ENCODE measurements at regions of chr5 and their contacts with region 1.

Region 1: DNA sequence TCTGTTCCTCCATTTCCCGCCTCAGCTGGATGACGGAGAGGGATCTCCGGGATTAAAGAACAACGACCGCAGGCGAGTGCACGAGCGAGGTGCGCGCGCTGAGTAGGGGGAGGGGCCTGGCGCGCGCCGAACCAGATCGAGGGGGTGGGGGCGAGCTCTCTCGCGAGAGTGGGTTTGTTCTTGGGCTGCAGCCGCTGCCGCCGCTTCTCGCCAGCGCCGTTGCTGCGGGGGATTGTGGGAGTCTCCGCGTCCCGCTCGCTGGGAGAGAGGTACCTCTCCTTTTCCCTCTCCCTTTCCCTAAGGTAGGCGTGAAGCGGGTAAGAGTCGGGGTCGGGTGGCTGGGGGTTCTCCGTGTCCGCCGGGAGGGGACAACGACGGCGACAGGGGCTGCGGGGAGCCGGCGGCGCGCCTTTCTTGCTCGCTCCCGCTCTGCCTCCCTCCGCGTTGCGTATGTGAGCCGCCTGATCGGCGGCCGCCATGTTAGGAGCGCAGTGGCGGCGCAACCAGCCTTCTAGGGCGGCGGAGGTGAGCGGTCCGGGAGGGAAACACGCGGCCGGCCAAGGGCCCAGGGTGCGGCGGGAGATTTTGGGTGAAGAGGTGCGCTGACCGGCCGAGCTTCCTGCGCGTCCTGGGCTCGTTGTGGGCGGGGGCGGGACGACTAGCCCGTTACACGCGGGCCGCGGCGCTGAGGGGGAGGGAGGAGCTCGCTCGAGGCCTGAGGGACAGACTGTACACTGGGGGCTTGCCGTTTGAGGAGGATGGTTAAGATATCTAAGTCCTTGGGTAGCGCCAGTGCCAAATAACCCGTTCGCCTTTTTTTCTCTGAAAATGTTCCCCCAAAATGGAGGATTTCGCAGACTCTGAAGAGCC is at the start of gene MATR3:
- DNase-seq: peak; percentile 90 to 95 (median 91)
- H3K4me3 ChIP-seq: peak within 1 kb of the TSS; percentile 78
- H3K4me3 Mint-ChIP-seq: peak within 1 kb of the TSS; percentile 93 to 99 (median 98)
- H3K27ac ChIP-seq: peak within 1 kb of the TSS; percentile 97
- H3K27ac Mint-ChIP-seq: peak within 1 kb of the TSS; percentile 68 to 99 (median 98)
- H3K4me1 ChIP-seq: peaks cover 38% of the 10 kb centered on the region
- H3K4me1 Mint-ChIP-seq: peaks cover 39 to 50% (median 49%) of the 10 kb centered on the region in 3 donors
- H3K27me3 ChIP-seq: no peaks in the 10 kb centered on the region
- H3K27me3 Mint-ChIP-seq: peaks cover 0 to 5% of the 10 kb centered on the region in 2 donors
- total RNA-seq, gene MATR3: 184 to 199 TPM

Region 2: GRCh38 chr5:138542956-138543729 is 750.6 kb before region 1 on chr5 and contains the start of gene ETF1:
- CTCF ChIA-PET with region 1: no interaction called
- POLR2A ChIA-PET with region 1: interaction called, 14 read pairs
- DNase-seq: peak; percentile 99 to 100 (median 100)
- H3K4me3 ChIP-seq: peak within 1 kb of the TSS; percentile 89
- H3K4me3 Mint-ChIP-seq: peak within 1 kb of the TSS; percentile 96 to 100 (median 98)
- H3K27ac ChIP-seq: peak within 1 kb of the TSS; percentile 99
- H3K27ac Mint-ChIP-seq: peak within 1 kb of the TSS; percentile 99 to 100 (median 100)
- H3K4me1 ChIP-seq: peaks cover 75% of the 10 kb centered on the region
- H3K4me1 Mint-ChIP-seq: peaks cover 71 to 94% (median 75%) of the 10 kb centered on the region in 3 donors
- H3K27me3 ChIP-seq: no peaks in the 10 kb centered on the region
- H3K27me3 Mint-ChIP-seq: no peaks in the 10 kb centered on the region
- total RNA-seq, gene ETF1: 239 to 246 TPM

Region 3: DNA sequence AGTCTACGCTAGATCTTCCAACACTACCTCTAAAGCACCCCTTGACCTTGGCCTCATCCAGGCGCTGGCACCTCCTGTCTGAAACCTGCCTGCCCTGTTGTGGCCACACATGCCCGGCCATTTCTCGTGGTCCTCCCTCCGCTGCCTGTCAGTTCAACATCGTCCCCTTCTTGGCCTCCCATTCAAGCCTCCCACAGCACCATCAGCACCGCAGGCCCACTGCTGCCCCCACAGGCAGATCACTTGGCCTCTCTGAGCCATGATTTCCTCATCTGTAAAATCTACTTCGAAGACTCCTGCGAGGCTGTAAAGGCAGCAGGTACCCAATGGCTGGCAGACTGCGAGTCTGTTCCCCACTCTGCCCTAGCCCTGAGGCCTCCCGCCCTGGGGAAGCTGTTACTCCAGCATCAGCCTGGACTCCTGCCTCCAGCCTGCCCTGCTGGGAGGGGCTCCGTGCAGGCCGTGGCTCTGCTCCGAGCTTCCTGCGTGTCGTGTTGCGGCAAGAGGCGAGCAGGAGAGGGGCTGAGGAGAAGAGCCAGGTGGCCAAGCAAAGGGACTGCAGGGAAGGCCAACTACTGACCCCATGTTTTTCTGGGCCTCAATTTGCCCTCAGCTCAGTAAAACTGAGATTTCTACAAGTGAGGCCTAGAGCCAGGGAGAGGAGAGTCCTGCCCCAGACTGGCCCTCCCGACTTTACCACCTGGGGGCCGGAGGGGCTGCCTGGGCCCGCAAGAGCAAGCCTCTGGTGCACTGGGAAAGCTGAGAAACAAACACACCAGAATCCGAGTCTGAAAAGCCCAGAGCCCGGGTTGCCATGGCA is 348.1 kb before region 1 on chr5:
- CTCF ChIA-PET with region 1: no interaction called
- POLR2A ChIA-PET with region 1: no interaction called
- DNase-seq: no peak
- H3K4me3 ChIP-seq: no peak overlapping the region
- H3K4me3 Mint-ChIP-seq: peak overlapping the region in 1 of 7 donors; percentile 83
- H3K27ac ChIP-seq: no peak overlapping the region
- H3K27ac Mint-ChIP-seq: no peak overlapping the region
- H3K4me1 ChIP-seq: no peaks in the 10 kb centered on the region
- H3K4me1 Mint-ChIP-seq: peaks cover 2 to 6% (median 4%) of the 10 kb centered on the region in 3 donors
- H3K27me3 ChIP-seq: no peaks in the 10 kb centered on the region
- H3K27me3 Mint-ChIP-seq: peaks cover 0 to 2% of the 10 kb centered on the region in 2 donors

Region 4: DNA sequence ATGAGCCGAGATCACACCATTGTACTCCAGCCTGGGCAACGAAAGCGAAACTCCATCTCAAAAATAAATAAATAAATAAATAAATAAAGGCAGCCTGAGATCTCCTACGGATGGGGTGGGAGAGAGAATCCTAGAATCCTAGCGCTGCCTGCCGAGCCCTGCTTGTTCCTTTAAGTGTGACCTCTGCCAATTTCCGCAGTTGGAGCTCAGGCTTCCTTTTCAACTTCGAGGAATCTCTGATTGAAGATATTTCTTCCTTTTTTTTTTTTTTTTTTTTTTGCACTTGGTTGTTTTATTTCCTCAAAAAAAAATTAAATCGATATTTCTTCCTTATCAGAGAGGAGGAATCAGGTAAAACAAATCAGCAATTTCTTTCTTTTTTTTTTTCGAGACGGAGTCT is 27.5 kb before region 1 on chr5:
- CTCF ChIA-PET with region 1: no interaction called
- POLR2A ChIA-PET with region 1: interaction called, 10 read pairs
- DNase-seq: no peak
- H3K4me3 ChIP-seq: no peak overlapping the region
- H3K4me3 Mint-ChIP-seq: no peak overlapping the region
- H3K27ac ChIP-seq: no peak overlapping the region
- H3K27ac Mint-ChIP-seq: no peak overlapping the region
- H3K4me1 ChIP-seq: no peaks in the 10 kb centered on the region
- H3K4me1 Mint-ChIP-seq: peaks cover 2 to 21% (median 19%) of the 10 kb centered on the region in 3 donors
- H3K27me3 ChIP-seq: no peaks in the 10 kb centered on the region
- H3K27me3 Mint-ChIP-seq: no peaks in the 10 kb centered on the region

Region 5: GRCh38 chr5:139304391-139305324 is 10.9 kb after region 1 on chr5:
- CTCF ChIA-PET with region 1: interaction called, 4 read pairs
- POLR2A ChIA-PET with region 1: interaction called, 16 read pairs
- DNase-seq: no peak
- H3K4me3 ChIP-seq: no peak overlapping the region
- H3K4me3 Mint-ChIP-seq: peak overlapping the region; percentile 21 to 75 (median 66)
- H3K27ac ChIP-seq: no peak overlapping the region
- H3K27ac Mint-ChIP-seq: peak overlapping the region; percentile 2 to 81 (median 38)
- H3K4me1 ChIP-seq: peaks cover 98% of the 10 kb centered on the region
- H3K4me1 Mint-ChIP-seq: peaks cover 90 to 97% (median 95%) of the 10 kb centered on the region in 3 donors
- H3K27me3 ChIP-seq: no peaks in the 10 kb centered on the region
- H3K27me3 Mint-ChIP-seq: no peaks in the 10 kb centered on the region

Region 6: DNA sequence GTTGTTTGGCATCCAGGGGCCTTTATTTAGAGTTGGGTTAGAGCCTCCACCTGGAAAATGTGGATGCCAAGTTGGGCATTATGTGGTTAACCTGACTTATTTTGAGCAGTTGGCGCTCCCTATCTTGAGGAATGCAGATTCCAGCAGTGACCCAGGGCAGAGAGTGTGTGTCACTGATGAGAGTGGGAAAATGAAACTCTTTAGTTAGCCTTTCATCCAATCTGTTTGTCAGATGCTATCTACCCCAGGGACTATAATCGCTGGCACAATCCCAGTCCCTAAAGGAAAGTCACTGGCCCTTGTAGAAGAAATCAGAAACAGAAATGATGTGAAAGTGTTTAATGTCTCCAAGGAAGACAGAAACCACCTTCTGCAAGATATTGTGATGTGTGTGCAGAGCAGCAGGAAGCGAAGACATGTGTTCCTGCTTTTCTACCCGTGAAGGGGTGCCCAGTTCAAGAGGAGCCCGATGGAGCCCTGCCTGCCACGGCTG is 199.0 kb after region 1 on chr5:
- CTCF ChIA-PET with region 1: no interaction called
- POLR2A ChIA-PET with region 1: no interaction called
- DNase-seq: no peak
- H3K4me3 ChIP-seq: no peak overlapping the region
- H3K4me3 Mint-ChIP-seq: peak overlapping the region in 1 of 7 donors; percentile 6
- H3K27ac ChIP-seq: no peak overlapping the region
- H3K27ac Mint-ChIP-seq: no peak overlapping the region
- H3K4me1 ChIP-seq: peaks cover 11% of the 10 kb centered on the region
- H3K4me1 Mint-ChIP-seq: peaks cover 3 to 23% (median 9%) of the 10 kb centered on the region in 3 donors
- H3K27me3 ChIP-seq: no peaks in the 10 kb centered on the region
- H3K27me3 Mint-ChIP-seq: peaks cover 0 to 5% of the 10 kb centered on the region in 2 donors

Region 7: GRCh38 chr5:139560752-139561654 is 267.3 kb after region 1 on chr5 and contains the start of gene UBE2D2:
- CTCF ChIA-PET with region 1: no interaction called
- POLR2A ChIA-PET with region 1: interaction called, 12 read pairs
- DNase-seq: peak; percentile 97 to 98 (median 97)
- H3K4me3 ChIP-seq: peak within 1 kb of the TSS; percentile 64
- H3K4me3 Mint-ChIP-seq: peak within 1 kb of the TSS; percentile 90 to 97 (median 95)
- H3K27ac ChIP-seq: peak within 1 kb of the TSS; percentile 77
- H3K27ac Mint-ChIP-seq: peak within 1 kb of the TSS; percentile 89 to 99 (median 97)
- H3K4me1 ChIP-seq: peaks cover 40% of the 10 kb centered on the region
- H3K4me1 Mint-ChIP-seq: peaks cover 36 to 46% (median 40%) of the 10 kb centered on the region in 3 donors
- H3K27me3 ChIP-seq: no peaks in the 10 kb centered on the region
- H3K27me3 Mint-ChIP-seq: peaks cover 0 to 3% of the 10 kb centered on the region in 2 donors
- total RNA-seq, gene UBE2D2: 253 to 274 TPM

Measured in CD8-positive, alpha-beta memory T cell (primary cell).